Endothelial cell of umbilical vein (primary cell): ENCODE measurements at regions of chr7 and their contacts with region 1.

Region 1: GRCh38 chr7:125061776-125062397 is 132.3 kb upstream of the POT1 start:
- DNase-seq: peak; percentile 83
- H3K4me3 ChIP-seq: no peak overlapping the region
- H3K27ac ChIP-seq: peak overlapping the region; percentile 89
- H3K4me1 ChIP-seq: peaks cover 13% of the 10 kb centered on the region
- H3K27me3 ChIP-seq: no peaks in the 10 kb centered on the region
- CTCF ChIP-seq: no peak
- POLR2A ChIP-seq: no peak

Region 2: GRCh38 chr7:124712017-124712416 is 349.9 kb before region 1 on chr7:
- CTCF ChIA-PET with region 1: no interaction called
- POLR2A ChIA-PET with region 1: no interaction called
- dilution Hi-C with region 1: no loop called
- intact Hi-C with region 1: no loop called
- DNase-seq: peak; percentile 15
- H3K4me3 ChIP-seq: no peak overlapping the region
- H3K27ac ChIP-seq: no peak overlapping the region
- H3K4me1 ChIP-seq: peaks cover 4% of the 10 kb centered on the region
- H3K27me3 ChIP-seq: no peaks in the 10 kb centered on the region
- CTCF ChIP-seq: no peak
- POLR2A ChIP-seq: no peak

Region 3: DNA sequence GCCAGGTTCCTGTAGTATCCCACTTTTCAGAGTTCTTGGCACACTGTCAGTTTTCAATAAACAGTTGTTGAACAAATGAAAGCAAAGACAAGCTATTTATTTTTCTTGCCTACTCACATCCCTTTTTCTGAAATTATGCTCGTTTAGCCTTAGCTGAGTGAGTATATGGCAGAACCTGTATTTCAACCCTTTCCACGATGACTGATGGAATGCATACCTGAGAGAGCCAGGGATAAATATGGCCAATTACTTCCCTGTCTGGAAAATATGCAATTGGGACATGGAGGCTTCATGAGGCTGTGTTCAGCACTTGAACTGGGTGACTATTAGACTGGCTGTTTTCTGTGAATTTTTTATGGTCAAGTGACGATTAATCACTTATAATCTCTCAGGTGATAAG is 12.3 kb after region 1 on chr7:
- CTCF ChIA-PET with region 1: interaction called, 15 read pairs
- POLR2A ChIA-PET with region 1: no interaction called
- dilution Hi-C with region 1: no loop called
- intact Hi-C with region 1: no loop called
- DNase-seq: peak; percentile 5
- H3K4me3 ChIP-seq: no peak overlapping the region
- H3K27ac ChIP-seq: no peak overlapping the region
- H3K4me1 ChIP-seq: no peaks in the 10 kb centered on the region
- H3K27me3 ChIP-seq: no peaks in the 10 kb centered on the region
- CTCF ChIP-seq: no peak
- POLR2A ChIP-seq: no peak

Region 4: DNA sequence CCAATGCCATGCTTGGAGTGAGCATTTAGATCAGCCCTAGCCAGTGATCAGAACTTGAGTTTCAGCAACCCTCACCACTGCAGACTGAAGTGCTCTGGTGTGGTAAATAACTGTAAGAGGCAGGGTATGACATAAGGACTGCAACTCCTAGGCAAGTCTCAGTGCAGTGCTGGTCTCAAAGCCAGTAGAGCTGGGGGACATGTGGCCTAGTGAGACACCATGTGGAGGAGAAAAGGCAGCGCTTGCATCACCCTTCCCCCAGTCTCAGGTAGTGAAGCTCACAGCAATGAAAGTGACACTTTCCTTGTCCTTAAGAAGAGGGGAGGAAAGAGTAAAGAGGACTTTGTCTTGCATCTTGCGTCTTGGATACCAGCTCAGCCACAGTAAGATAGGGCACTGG is 254.6 kb after region 1 on chr7:
- CTCF ChIA-PET with region 1: interaction called, 31 read pairs
- POLR2A ChIA-PET with region 1: no interaction called
- dilution Hi-C with region 1: no loop called
- intact Hi-C with region 1: loop called (anchors 5 kb)
- DNase-seq: peak; percentile 21
- H3K4me3 ChIP-seq: no peak overlapping the region
- H3K27ac ChIP-seq: no peak overlapping the region
- H3K4me1 ChIP-seq: no peaks in the 10 kb centered on the region
- H3K27me3 ChIP-seq: no peaks in the 10 kb centered on the region
- CTCF ChIP-seq: peak in 1 of 2 donors; percentile 21
- POLR2A ChIP-seq: no peak

Region 5: DNA sequence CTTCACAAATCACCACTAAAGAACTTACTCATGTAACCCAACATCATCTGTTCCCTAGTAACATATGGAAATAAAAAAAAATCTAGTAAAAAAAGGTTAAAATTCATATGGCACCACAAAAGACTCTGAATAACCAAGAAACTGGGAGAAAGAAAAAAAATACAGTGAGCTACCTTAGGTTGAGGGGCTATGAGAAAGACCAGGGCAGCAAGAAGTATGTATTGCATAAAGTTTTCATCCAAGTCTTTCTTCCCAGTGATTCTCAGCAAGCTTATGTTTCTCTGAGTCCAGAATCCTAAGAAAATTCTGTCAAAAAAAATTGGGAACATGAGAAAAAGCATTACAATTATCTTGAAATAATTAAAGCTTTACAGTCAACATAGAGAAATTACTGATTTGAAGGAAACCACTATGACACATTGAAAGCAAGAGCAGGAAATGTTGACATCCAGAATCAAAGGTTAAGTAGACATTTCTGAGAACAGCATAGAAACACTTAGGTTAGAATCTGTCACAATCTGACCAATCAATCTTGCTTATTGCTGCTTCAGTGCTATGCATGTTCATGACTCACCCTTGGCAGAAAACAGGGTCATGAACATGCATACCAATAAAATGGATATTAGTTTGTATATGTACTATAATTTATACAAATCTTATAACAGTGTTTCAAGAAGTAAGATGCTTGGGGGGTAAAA is 361.7 kb after region 1 on chr7:
- CTCF ChIA-PET with region 1: interaction called, 6 read pairs
- POLR2A ChIA-PET with region 1: no interaction called
- dilution Hi-C with region 1: no loop called
- intact Hi-C with region 1: loop called (anchors 10 kb)
- DNase-seq: peak; percentile 94
- H3K4me3 ChIP-seq: no peak overlapping the region
- H3K27ac ChIP-seq: peak overlapping the region; percentile 52
- H3K4me1 ChIP-seq: peaks cover 21% of the 10 kb centered on the region
- H3K27me3 ChIP-seq: no peaks in the 10 kb centered on the region
- CTCF ChIP-seq: no peak
- POLR2A ChIP-seq: no peak

Region 6: DNA sequence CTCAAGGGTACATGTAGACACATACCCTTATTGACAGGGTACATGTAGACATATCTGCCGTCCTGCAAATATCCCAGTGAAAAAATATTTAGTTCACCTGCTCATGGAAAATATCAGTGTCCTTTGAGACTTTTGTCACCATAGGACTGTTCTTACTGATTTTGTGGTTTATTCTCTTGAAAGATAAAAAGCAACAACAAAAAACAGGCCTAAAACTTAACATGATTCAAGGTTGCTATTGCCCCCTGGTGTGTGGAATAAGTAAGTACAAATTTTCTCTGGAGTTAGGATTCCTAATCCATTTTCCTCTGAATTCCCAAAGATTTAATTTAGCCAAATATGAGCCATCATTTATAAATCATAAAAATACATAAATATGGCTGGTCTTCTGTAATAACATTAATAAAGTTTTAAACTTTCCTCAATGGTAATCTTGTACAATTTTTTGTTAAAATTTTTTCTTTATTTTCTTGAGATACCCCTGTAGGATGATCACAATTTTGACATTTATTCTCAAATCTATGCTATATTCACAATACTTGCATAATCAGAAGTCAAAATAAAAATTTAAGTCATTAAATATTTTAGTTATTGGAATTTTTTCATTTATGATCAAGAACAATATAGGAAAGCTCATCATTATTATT is 609.2 kb after region 1 on chr7:
- CTCF ChIA-PET with region 1: interaction called, 297 read pairs
- POLR2A ChIA-PET with region 1: interaction called, 4 read pairs
- dilution Hi-C with region 1: no loop called
- intact Hi-C with region 1: loop called (anchors 1 kb)
- DNase-seq: peak; percentile 61
- H3K4me3 ChIP-seq: no peak overlapping the region
- H3K27ac ChIP-seq: no peak overlapping the region
- H3K4me1 ChIP-seq: no peaks in the 10 kb centered on the region
- H3K27me3 ChIP-seq: no peaks in the 10 kb centered on the region
- CTCF ChIP-seq: peak; percentile 26 to 38
- POLR2A ChIP-seq: no peak